ENCODE measurements at regions of chr11 and their contacts with region 1.

Region 1: DNA sequence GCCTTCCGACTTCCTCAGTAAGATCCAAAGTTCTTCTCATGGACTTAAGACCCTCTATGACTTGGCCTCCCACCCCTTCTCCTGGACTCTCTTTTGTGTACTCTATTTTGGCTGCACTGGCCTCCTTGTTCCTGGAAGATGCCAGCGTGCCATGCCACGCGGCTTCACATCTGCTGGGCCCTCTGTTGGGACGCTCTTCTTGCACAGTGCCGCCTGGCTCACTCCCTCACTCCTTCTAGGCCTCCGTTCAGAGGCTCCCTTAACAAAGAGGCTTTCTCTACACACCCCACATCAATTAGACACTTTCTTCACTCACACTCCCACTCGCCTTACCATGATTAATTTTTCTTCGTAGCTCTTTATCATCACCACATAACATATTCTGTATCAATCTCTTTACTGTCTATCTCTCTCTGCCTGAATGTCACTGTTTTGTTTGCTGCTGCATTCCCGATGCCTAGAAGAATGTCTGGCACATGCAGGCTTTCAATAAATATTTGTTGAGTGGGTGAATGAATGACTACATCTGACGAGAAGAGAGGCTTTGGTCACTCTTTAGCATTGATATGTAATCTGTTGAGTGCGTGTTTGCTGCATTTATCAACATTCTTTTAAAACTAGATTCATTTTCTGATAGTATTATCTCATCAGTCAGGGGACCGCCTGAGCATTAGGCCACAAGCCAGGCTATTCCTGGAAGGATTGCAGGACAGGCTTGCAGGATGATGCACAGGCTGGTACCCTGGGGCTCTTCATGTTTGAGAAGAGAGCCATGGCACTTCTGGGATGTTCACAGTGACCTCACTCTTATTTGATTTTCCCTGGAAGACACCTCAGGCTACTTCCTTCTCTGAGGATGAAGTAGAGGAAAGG is 60.6 kb upstream of the AMPD3 start:
- DNase-seq: peak; percentile 84 to 93
- H3K4me3 ChIP-seq: no peak overlapping the region
- H3K4me3 Mint-ChIP-seq: peak overlapping the region; percentile 57
- H3K27ac Mint-ChIP-seq: peak overlapping the region; percentile 80
- H3K4me1 ChIP-seq: peaks cover 66% of the 10 kb centered on the region
- H3K4me1 Mint-ChIP-seq: peaks cover 66% of the 10 kb centered on the region
- H3K27me3 ChIP-seq: no peaks in the 10 kb centered on the region
- H3K27me3 Mint-ChIP-seq: no peaks in the 10 kb centered on the region
- CTCF ChIP-seq: no peak

Region 2: GRCh38 chr11:10351768-10352641 is 42.5 kb before region 1 on chr11:
- CTCF ChIA-PET with region 1: no interaction called
- POLR2A ChIA-PET with region 1: no interaction called
- intact Hi-C with region 1: loop called (anchors 2 kb)
- DNase-seq: peak in 1 of 2 experiments; percentile 81
- H3K4me3 ChIP-seq: peak overlapping the region; percentile 20
- H3K4me3 Mint-ChIP-seq: peak overlapping the region; percentile 42
- H3K27ac Mint-ChIP-seq: peak overlapping the region; percentile 22
- H3K4me1 ChIP-seq: peaks cover 47% of the 10 kb centered on the region
- H3K4me1 Mint-ChIP-seq: peaks cover 14% of the 10 kb centered on the region
- H3K27me3 ChIP-seq: no peaks in the 10 kb centered on the region
- H3K27me3 Mint-ChIP-seq: no peaks in the 10 kb centered on the region
- CTCF ChIP-seq: no peak

Region 3: GRCh38 chr11:10659339-10660216 is 265.1 kb after region 1 on chr11:
- CTCF ChIA-PET with region 1: no interaction called
- POLR2A ChIA-PET with region 1: no interaction called
- intact Hi-C with region 1: loop called (anchors 1 kb)
- DNase-seq: peak; percentile 89 to 95
- H3K4me3 ChIP-seq: no peak overlapping the region
- H3K4me3 Mint-ChIP-seq: peak overlapping the region; percentile 32
- H3K27ac Mint-ChIP-seq: peak overlapping the region; percentile 97
- H3K4me1 ChIP-seq: peaks cover 69% of the 10 kb centered on the region
- H3K4me1 Mint-ChIP-seq: peaks cover 43% of the 10 kb centered on the region
- H3K27me3 ChIP-seq: no peaks in the 10 kb centered on the region
- H3K27me3 Mint-ChIP-seq: no peaks in the 10 kb centered on the region
- CTCF ChIP-seq: no peak